CD14-positive monocyte (primary cell): ENCODE measurements at regions of chr16 and their contacts with region 1.

Region 1: DNA sequence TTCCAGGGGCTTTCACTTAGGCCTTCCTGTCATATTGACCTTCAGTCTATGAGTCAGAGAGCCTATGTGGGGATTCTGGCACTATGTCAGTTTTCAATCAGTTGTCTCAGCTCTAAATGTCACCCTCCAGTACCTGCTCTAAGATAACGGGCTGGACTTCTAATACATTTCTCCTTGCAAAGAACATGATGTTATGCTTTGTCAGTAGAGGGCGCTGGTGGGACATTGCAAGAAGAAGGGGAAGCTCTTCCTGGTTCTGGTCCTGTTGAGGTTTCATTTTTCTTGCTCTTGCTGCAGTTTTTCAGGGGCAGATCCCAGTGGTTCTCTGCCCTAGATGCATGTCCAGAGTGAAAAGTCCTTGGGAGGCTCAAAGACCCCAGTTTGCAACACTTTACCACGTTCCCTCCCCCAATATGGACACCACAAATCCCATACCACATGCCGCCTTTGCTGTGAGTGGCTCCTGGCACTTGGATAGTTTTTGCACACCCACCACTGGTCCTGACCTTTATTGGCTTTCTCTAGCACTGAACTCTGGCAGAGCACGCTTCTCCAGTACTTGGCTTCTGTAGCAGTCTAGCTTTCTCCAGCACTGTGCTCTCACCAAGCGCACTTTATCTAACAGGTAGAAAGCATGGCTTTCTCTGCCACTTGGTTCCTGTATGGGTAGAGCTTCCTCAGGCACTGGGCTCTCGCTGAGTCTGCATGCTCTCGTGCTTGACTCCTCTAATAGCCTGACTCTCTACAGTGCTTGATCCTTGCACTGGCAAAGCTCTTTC is 49.0 kb downstream of the BCL7C start:
- DNase-seq: peak; percentile 78 to 88 (median 81)
- H3K4me3 ChIP-seq: peak overlapping the region; percentile 20 to 67 (median 26)
- H3K4me3 Mint-ChIP-seq: peak overlapping the region; percentile 70 to 88
- H3K27ac ChIP-seq: peak overlapping the region in 1 of 2 donors; percentile 50
- H3K27ac Mint-ChIP-seq: peak overlapping the region in 6 of 7 donors; percentile 60 to 89 (median 78)
- H3K4me1 ChIP-seq: peaks cover 7 to 9% of the 10 kb centered on the region in 2 donors
- H3K4me1 Mint-ChIP-seq: peaks cover 10% of the 10 kb centered on the region
- H3K27me3 ChIP-seq: no peaks in the 10 kb centered on the region
- H3K27me3 Mint-ChIP-seq: peaks cover 0 to 2% (median 0%) of the 10 kb centered on the region in 3 donors
- CTCF ChIP-seq: peak; percentile 85

Region 2: DNA sequence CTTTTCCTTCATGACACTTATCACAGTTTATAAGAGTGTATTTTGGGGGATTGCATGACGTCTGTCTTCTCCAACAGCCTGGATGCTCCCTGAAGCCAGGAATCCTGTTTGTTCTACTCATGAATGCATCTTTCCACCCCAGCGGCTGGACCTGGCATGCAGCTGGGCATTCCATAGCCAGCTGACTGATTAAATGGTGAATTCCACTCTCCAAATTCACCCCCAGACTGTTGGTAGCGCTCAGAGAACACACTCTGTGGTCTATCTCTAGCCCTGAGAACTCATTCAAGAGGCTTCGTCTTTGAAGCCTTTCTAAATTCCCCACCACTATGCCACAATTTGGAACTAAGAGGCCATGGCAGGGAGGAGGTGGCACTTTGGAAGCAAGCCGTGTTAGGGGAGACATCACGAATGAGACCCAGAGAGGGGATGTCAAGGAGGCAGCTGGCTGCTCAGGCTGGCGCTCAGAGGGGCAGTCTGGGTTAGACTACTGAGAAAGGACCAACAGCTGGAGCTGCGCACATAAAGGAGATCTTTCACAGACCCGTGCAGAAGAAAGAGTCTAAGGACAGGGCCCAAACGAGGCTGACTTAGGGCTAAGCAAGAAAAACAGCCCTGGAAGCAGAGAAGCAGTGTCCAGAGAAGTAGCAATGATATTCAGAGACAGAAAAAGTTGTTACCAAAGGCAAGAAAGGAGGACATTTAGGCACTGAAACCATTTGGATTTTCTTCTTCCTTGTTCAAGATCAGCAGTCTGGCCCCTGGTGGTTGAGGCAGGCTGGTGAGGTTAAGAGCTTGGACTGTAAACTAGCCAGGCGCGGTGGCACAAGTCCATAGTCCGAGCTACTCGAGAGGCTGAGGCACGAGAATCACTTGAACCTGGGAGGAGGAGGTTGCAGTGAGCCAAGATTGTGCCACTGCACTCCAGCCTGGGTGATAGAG is 15.5 kb before region 1 on chr16:
- intact Hi-C with region 1: no loop called
- DNase-seq: no peak
- H3K4me3 ChIP-seq: no peak overlapping the region
- H3K4me3 Mint-ChIP-seq: no peak overlapping the region
- H3K27ac ChIP-seq: no peak overlapping the region
- H3K27ac Mint-ChIP-seq: no peak overlapping the region
- H3K4me1 ChIP-seq: no peaks in the 10 kb centered on the region
- H3K4me1 Mint-ChIP-seq: no peaks in the 10 kb centered on the region
- H3K27me3 ChIP-seq: no peaks in the 10 kb centered on the region
- H3K27me3 Mint-ChIP-seq: peaks cover 0 to 10% (median 4%) of the 10 kb centered on the region in 3 donors
- CTCF ChIP-seq: no peak

Region 3: GRCh38 chr16:30902029-30902972 is 57.4 kb after region 1 on chr16:
- intact Hi-C with region 1: loop called (anchors 5 kb)
- DNase-seq: peak; percentile 53 to 72 (median 70)
- H3K4me3 ChIP-seq: peak overlapping the region; percentile 43 to 87 (median 48)
- H3K4me3 Mint-ChIP-seq: peak overlapping the region; percentile 96 to 98
- H3K27ac ChIP-seq: peak overlapping the region; percentile 80 to 89
- H3K27ac Mint-ChIP-seq: peak overlapping the region; percentile 90 to 97 (median 96)
- H3K4me1 ChIP-seq: peaks cover 41 to 48% of the 10 kb centered on the region in 2 donors
- H3K4me1 Mint-ChIP-seq: peaks cover 44% of the 10 kb centered on the region
- H3K27me3 ChIP-seq: no peaks in the 10 kb centered on the region
- H3K27me3 Mint-ChIP-seq: peaks cover 0 to 5% (median 0%) of the 10 kb centered on the region in 3 donors
- CTCF ChIP-seq: peak; percentile 34

Region 4: DNA sequence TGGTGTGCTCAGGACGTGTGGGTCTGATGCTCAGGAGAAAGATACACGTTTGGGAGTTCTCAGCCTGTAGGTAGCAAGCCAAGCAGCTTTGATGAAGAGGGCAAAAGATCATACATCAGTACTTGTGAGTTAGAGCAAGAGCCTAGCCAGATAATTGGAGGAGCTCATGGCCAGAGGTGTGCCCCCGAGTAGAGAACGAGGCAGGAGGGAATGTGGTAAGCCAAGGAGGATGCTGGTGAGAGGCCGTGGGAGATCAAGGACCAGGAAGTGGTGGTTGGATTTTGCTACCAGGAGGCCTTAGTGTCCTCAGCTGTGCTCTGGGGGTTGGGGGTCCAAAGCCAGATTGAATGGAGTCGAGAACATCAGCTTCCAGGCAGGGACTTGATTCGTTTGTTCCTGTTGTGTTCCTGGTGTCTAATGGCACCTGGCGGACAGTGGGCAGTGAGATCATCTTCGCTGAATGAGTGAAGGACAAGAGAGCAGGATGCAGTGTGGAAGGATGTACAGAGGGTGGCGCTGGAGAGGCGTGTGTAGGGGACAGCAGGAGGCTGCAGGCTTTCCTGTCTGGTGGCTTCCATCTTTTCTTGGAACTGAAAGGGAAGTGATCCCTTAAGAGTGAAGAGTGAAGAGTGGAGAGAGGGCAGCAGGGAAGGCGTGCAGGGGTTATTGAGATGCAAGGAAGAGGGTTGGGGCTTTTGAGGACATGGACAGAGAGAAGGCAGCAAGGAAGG is 90.1 kb after region 1 on chr16:
- intact Hi-C with region 1: loop called in 1 of 2 experiments (anchors 5 kb)
- DNase-seq: peak; percentile 38 to 62 (median 55)
- H3K4me3 ChIP-seq: no peak overlapping the region
- H3K4me3 Mint-ChIP-seq: no peak overlapping the region
- H3K27ac ChIP-seq: no peak overlapping the region
- H3K27ac Mint-ChIP-seq: peak overlapping the region in 4 of 7 donors; percentile 4 to 72 (median 50)
- H3K4me1 ChIP-seq: peaks cover 14 to 17% of the 10 kb centered on the region in 2 donors
- H3K4me1 Mint-ChIP-seq: peaks cover 22% of the 10 kb centered on the region
- H3K27me3 ChIP-seq: no peaks in the 10 kb centered on the region
- H3K27me3 Mint-ChIP-seq: no peaks in the 10 kb centered on the region
- CTCF ChIP-seq: peak; percentile 75

Region 5: DNA sequence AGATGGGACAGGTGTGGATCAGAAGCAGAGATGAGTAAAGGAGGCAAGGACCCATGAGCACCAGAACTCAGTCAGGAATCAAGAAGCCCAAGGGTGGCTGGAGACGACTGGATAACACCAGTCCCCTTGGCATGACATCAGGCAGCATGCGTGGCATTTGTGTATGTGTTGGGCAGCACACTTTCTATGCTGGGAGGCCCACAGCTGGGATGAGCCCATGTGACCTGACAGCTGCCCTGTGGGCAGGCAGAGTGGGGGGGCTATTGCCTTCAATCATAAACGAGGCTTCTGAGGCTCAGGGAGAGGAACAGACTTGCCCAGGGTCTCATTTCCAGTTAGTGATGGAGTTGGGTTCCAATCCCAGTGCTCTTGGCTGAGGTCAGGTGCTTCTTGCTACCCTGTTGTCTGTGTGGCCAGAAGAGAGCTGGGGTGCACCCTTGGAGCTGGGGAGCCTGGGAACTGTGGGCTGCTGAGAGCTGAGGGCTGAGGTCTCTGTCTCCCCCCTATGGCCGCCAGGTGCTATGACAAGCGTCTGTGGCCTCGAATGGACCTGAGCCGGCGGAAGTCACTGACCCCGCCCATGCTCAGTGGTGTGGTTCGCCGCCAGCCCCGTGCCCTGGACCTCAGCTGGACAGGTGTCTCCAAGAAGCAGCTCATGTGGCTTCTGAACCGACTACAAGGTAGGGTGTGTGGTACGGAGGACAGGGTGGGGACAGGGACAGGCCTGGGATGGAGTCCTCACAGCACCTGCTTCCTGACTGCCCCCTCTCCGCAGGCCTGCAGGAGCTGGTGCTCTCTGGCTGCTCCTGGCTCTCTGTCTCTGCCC is 97.0 kb after region 1 on chr16:
- intact Hi-C with region 1: loop called (anchors 1 to 5 kb)
- DNase-seq: peak; percentile 77 to 80 (median 77)
- H3K4me3 ChIP-seq: peak overlapping the region in 1 of 3 experiments; percentile 33
- H3K4me3 Mint-ChIP-seq: no peak overlapping the region
- H3K27ac ChIP-seq: no peak overlapping the region
- H3K27ac Mint-ChIP-seq: peak overlapping the region in 2 of 7 donors; percentile 58 to 68
- H3K4me1 ChIP-seq: peaks cover 17 to 19% of the 10 kb centered on the region in 2 donors
- H3K4me1 Mint-ChIP-seq: peaks cover 24% of the 10 kb centered on the region
- H3K27me3 ChIP-seq: no peaks in the 10 kb centered on the region
- H3K27me3 Mint-ChIP-seq: peaks cover 0 to 2% (median 0%) of the 10 kb centered on the region in 3 donors
- CTCF ChIP-seq: peak; percentile 90